ENCODE measurements at regions of chr3 and their contacts with region 1.

Region 1: GRCh38 chr3:100041328-100041749 is 73.0 kb downstream of the FILIP1L start:
- DNase-seq: peak; percentile 75
- H3K4me3 ChIP-seq: no peak overlapping the region
- H3K27ac ChIP-seq: peak overlapping the region; percentile 95
- H3K4me1 ChIP-seq: peaks cover 44% of the 10 kb centered on the region
- H3K27me3 ChIP-seq: no peaks in the 10 kb centered on the region
- CTCF ChIP-seq: no peak

Region 2: GRCh38 chr3:100002599-100003350 is 38.6 kb before region 1 on chr3:
- CTCF ChIA-PET with region 1: no interaction called
- dilution Hi-C with region 1: no loop called
- in situ Hi-C with region 1: no loop called
- intact Hi-C with region 1: loop called (anchors 2 kb)
- DNase-seq: peak; percentile 99
- H3K4me3 ChIP-seq: no peak overlapping the region
- H3K27ac ChIP-seq: peak overlapping the region; percentile 83
- H3K4me1 ChIP-seq: peaks cover 38% of the 10 kb centered on the region
- H3K27me3 ChIP-seq: no peaks in the 10 kb centered on the region
- CTCF ChIP-seq: no peak

Region 3: DNA sequence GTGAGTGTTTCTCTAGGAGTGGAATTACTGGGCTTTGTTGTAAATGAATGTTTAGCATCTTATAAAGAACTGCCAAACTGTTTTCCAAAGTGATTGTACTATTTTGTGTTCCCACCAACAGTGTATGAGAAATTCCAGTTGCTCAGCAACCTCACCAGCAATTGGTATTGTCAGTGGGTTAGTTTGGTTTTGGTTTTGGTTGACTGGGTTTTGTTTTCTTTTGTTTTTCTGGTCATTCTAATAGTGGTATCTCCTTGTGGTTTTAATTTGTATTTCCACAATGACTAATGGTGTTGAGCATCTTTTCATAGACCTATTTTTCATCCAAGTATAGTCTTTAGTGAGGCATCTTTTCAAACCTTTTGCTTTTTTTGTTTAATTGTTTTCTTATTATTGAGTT is 45.9 kb after region 1 on chr3:
- CTCF ChIA-PET with region 1: no interaction called
- dilution Hi-C with region 1: no loop called
- in situ Hi-C with region 1: no loop called
- intact Hi-C with region 1: loop called (anchors 2 kb)
- DNase-seq: peak; percentile 87
- H3K4me3 ChIP-seq: no peak overlapping the region
- H3K27ac ChIP-seq: peak overlapping the region; percentile 7
- H3K4me1 ChIP-seq: no peaks in the 10 kb centered on the region
- H3K27me3 ChIP-seq: no peaks in the 10 kb centered on the region
- CTCF ChIP-seq: no peak

Region 4: DNA sequence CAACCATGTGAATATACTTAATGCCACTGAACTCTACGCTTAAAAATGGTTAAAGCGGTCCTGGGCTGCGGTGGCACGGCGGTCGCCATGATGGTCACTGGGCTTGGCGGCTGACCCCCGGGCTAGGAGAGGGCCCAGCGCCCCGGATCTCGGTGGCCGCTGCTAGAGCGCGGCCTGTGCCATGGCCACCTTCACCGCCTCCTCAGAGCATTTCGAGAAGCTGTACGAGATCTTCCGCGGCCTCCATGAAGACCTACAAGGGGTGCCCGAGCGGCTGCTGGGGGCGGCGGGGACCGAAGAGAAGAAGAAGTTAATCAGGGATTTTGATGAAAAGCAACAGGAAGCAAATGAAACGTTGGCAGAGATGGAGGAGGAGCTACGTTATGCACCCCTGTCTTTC is 183.9 kb after region 1 on chr3:
- CTCF ChIA-PET with region 1: no interaction called
- dilution Hi-C with region 1: no loop called
- in situ Hi-C with region 1: no loop called
- intact Hi-C with region 1: no loop called
- DNase-seq: no peak
- H3K4me3 ChIP-seq: no peak overlapping the region
- H3K27ac ChIP-seq: no peak overlapping the region
- H3K4me1 ChIP-seq: no peaks in the 10 kb centered on the region
- H3K27me3 ChIP-seq: no peaks in the 10 kb centered on the region
- CTCF ChIP-seq: no peak

Measured in mammary epithelial cell (primary cell).